Activated CD4-positive, alpha-beta memory T cell treated with anti-CD3 and anti-CD28 coated beads, Interleukin-2, amount 10 ng/mL, durations not matched to agents 7 days and 5 days (primary cell): ENCODE measurements at regions of chr11 and their contacts with region 1.

Region 1: DNA sequence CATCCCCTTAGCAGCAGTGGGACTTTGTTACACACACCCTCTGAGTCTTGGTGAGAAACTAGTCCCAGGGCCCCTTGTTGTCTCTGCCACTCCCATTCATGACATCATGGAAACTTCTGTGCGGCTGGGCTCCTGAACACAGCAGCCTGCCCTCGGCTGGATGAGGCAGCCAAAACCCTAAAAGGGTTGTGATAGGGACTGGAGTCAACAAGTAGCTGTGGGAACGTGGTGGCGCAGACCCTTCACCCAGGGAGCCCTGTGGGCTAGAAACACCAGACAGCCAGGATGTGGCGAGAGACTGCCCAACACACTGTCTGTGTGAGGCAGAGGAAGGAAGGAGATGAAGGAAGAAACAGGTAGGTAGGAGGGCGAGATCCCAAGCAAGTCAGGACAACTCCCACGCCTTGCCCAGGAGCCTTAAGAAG is 3.9 kb downstream of the CD3D start:
- DNase-seq: peak; percentile 93
- H3K4me3 Mint-ChIP-seq: peak overlapping the region; percentile 89
- H3K27ac Mint-ChIP-seq: peak overlapping the region; percentile 99
- H3K4me1 Mint-ChIP-seq: peaks cover 58% of the 10 kb centered on the region
- H3K27me3 Mint-ChIP-seq: no peaks in the 10 kb centered on the region

Region 2: DNA sequence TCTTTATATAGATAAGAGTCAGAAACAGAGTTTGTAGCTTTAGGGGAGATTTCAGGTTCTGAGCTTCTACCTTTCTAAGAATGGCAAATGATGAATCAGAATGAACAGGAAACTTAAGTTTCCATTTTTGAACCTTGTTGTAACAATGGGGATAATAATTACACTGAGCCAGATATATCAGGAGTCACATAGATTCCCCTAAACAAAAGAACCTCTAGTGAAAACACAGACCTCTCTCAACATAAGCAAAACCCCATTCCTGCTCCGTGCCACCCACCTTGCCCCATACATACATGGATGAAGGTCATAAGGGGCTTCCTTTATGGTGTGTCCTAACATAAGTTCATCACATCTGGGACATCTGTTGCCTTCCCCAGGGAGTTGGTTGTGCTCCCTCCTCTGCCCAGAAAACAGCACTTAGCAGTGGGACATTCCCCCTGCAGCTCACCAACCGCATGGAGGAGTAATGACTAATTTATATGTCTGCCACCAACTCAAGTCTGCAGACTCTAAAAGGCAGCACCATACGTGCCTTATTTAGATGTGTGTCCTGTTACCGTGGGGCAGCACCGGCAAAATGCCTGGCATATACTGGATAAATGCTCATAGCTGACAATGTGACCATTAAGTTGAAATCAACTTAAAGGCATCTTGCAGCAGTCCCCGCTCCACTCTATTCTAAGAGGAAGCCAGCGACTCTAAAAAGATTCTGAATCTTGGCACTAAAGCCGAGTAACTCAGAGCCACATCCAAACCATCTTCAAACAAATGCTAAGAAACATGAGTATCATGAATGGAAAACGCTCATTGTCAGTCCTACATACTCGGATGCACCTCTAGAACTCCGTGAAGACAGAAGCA is 121.8 kb before region 1 on chr11:
- CTCF ChIA-PET with region 1: interaction called, 3 read pairs
- POLR2A ChIA-PET with region 1: interaction called, 13 read pairs
- DNase-seq: peak; percentile 57
- H3K4me3 Mint-ChIP-seq: peak overlapping the region; percentile 74
- H3K27ac Mint-ChIP-seq: peak overlapping the region; percentile 94
- H3K4me1 Mint-ChIP-seq: peaks cover 96% of the 10 kb centered on the region
- H3K27me3 Mint-ChIP-seq: no peaks in the 10 kb centered on the region

Region 3: GRCh38 chr11:118240999-118241768 is 97.5 kb before region 1 on chr11:
- CTCF ChIA-PET with region 1: no interaction called
- POLR2A ChIA-PET with region 1: interaction called, 42 read pairs
- DNase-seq: peak; percentile 74
- H3K4me3 Mint-ChIP-seq: peak overlapping the region; percentile 67
- H3K27ac Mint-ChIP-seq: peak overlapping the region; percentile 93
- H3K4me1 Mint-ChIP-seq: peaks cover 90% of the 10 kb centered on the region
- H3K27me3 Mint-ChIP-seq: no peaks in the 10 kb centered on the region

Region 4: DNA sequence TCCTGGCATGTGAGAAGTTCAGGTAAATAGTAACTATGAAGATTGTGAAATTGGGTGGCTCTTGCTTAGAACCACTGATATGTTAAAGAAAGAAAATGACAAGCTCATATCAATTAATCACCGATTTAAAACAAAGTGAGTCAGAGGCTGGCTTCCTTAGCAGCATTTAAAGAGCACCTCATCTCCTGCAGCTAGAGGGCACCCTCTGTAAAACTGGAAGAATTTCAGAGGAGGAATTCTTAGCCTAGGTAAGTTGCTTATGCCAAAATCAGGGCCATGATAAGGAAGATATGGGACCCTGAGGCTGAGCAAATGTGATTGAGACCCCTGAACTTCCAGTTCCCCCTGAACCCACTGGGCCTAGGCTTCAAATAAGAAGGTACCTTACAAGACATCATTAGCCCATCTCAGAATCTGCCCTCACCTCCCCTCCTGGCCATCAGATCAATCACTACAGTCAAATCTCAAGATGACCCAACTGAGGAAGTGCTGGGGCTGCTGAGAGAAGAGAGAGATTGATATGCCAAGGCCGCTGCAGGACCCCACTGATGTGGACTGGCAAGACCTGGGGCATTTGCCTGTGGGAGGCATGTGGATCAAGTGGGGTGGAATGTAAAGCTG is 42.7 kb before region 1 on chr11:
- CTCF ChIA-PET with region 1: interaction called, 73 read pairs
- POLR2A ChIA-PET with region 1: interaction called, 7 read pairs
- DNase-seq: peak; percentile 42
- H3K4me3 Mint-ChIP-seq: no peak overlapping the region
- H3K27ac Mint-ChIP-seq: no peak overlapping the region
- H3K4me1 Mint-ChIP-seq: peaks cover 19% of the 10 kb centered on the region
- H3K27me3 Mint-ChIP-seq: peaks cover 1% of the 10 kb centered on the region

Region 5: DNA sequence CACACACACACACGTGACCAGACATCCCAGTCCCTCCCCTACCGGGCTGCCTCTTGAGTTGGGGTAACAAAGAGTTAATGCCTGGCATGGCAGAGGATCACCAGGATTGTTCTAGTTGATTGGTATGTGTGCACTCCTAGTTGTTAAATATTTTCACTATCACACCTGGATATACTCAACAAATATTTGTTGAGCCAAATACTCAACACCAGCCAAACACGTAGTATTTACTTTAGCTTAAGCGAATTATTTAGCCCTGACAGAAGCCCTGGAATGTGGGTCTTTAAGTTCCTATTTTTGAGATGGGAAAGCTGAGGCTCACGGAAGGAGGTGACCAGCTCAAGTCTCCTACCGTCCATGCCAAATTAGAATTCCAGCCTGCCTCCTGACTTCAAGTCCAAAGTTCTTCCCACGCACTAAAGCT is 23.6 kb before region 1 on chr11:
- CTCF ChIA-PET with region 1: interaction called, 12 read pairs
- POLR2A ChIA-PET with region 1: no interaction called
- DNase-seq: no peak
- H3K4me3 Mint-ChIP-seq: peak overlapping the region; percentile 54
- H3K27ac Mint-ChIP-seq: peak overlapping the region; percentile 97
- H3K4me1 Mint-ChIP-seq: peaks cover 85% of the 10 kb centered on the region
- H3K27me3 Mint-ChIP-seq: no peaks in the 10 kb centered on the region

Region 6: DNA sequence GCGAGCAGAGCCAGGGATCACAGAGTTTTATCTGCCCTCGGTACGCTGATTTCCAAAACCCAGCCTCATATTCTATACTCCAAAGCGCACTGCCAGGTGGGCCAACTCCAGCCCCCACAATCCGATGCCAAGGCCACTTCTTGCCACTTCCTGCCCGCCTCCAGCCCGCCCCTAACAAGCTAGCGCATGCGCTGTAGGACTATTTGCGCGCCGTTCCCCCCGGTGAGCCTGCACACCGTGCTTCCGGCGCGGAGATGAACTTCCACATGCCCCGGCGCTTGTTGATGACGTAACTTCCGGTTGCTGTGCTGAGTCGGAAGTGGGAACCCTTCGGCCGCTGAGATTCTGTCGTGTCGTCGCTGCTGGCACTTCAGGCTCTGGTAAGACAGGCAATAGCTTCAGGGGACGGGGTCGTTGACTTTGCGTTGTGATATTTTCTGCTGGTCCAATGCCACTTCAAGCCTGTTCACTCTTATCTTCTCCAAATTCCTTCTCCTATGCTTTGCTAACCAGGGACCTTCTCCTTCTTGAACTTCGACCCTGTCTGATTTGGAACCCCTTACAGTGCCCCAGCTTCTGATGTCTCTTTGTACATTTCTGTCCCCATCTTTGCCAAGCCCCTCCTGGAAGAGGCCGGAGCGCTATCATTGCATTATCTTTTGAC is 20.8 kb after region 1 on chr11 and contains the start of gene UBE4A:
- CTCF ChIA-PET with region 1: interaction called, 3 read pairs
- POLR2A ChIA-PET with region 1: interaction called, 19 read pairs
- DNase-seq: peak; percentile 98
- H3K4me3 Mint-ChIP-seq: peak within 1 kb of the TSS; percentile 92
- H3K27ac Mint-ChIP-seq: peak within 1 kb of the TSS; percentile 83
- H3K4me1 Mint-ChIP-seq: peaks cover 45% of the 10 kb centered on the region
- H3K27me3 Mint-ChIP-seq: no peaks in the 10 kb centered on the region
- total RNA-seq, gene UBE4A: 42.1 to 44.1 TPM

Region 7: GRCh38 chr11:118514103-118514502 is 175.5 kb after region 1 on chr11:
- CTCF ChIA-PET with region 1: no interaction called
- POLR2A ChIA-PET with region 1: no interaction called
- DNase-seq: no peak
- H3K4me3 Mint-ChIP-seq: no peak overlapping the region
- H3K27ac Mint-ChIP-seq: peak overlapping the region; percentile 71
- H3K4me1 Mint-ChIP-seq: peaks cover 8% of the 10 kb centered on the region
- H3K27me3 Mint-ChIP-seq: no peaks in the 10 kb centered on the region